Body of pancreas (tissue), 4 donors: ENCODE measurements at regions of chr7 and their contacts with region 1.

Region 1: GRCh38 chr7:148884299-148885022 is 370 bp upstream of the EZH2 start:
- DNase-seq: peak; percentile 91 to 93 (median 92)
- ATAC-seq: peak; percentile 97
- H3K4me3 ChIP-seq: peak overlapping the region; percentile 9 to 88
- H3K27ac ChIP-seq: peak overlapping the region; percentile 80 to 98 (median 90)
- H3K4me1 ChIP-seq: peaks cover 6% of the 10 kb centered on the region
- H3K27me3 ChIP-seq: no peaks in the 10 kb centered on the region
- CTCF ChIP-seq: no peak
- POLR2A ChIP-seq: peak; percentile 79 to 85 (median 83)

Region 2: DNA sequence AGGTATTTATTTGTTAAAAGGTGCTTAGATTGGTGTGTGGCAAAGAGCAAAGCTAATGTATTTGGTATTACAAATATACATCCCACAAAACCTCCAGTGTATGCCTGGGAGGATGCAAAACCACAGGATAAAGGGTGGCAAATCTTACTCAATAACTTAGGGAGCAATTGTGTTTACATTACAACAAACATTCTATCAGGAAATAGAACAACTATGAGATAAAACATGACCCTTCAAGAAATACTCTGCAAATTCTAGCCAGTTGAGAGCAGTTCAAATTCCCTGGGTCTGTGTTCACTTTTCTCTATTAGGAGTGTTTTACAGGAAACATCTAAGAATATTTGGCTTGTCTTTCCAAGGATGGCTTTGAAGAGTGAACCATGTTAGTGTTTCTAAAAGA is 120.8 kb before region 1 on chr7:
- intact Hi-C with region 1: no loop called
- DNase-seq: no peak
- ATAC-seq: no peak
- H3K4me3 ChIP-seq: no peak overlapping the region
- H3K27ac ChIP-seq: no peak overlapping the region
- H3K4me1 ChIP-seq: no peaks in the 10 kb centered on the region
- H3K27me3 ChIP-seq: no peaks in the 10 kb centered on the region
- CTCF ChIP-seq: no peak
- POLR2A ChIP-seq: no peak

Region 3: DNA sequence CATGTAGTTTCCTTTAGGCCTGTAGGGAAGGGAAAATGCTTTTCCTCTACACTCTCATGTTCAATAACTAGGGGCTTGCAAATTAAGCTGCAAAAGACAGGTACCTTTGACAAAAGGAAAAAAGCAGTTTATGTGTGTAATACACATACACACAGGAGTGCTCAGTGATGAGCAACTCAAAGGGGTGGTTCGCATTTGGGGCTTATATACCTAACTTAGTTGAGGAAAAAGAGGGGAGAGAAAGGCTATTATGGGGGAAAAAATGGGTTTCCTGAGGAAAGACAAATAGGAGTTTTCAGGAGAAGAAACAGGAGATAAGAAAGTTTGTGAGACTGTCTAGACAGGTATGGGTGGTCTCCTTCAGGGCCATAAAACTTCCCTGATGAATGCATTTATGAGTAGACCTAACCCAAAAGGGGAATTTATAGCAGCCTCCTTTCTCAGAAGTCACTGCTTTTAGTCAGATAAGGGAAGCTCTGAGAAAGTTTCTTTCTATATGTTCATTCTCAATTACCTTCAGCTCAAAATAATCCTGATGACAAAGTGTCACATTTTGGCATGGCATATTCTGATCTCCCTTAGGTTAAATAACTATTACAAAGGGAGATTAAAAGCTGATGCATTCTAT is 54.8 kb after region 1 on chr7:
- intact Hi-C with region 1: loop called (anchors 10 kb)
- DNase-seq: no peak
- ATAC-seq: no peak
- H3K4me3 ChIP-seq: no peak overlapping the region
- H3K27ac ChIP-seq: no peak overlapping the region
- H3K4me1 ChIP-seq: peaks cover 8% of the 10 kb centered on the region
- H3K27me3 ChIP-seq: no peaks in the 10 kb centered on the region
- CTCF ChIP-seq: no peak
- POLR2A ChIP-seq: no peak

Region 4: DNA sequence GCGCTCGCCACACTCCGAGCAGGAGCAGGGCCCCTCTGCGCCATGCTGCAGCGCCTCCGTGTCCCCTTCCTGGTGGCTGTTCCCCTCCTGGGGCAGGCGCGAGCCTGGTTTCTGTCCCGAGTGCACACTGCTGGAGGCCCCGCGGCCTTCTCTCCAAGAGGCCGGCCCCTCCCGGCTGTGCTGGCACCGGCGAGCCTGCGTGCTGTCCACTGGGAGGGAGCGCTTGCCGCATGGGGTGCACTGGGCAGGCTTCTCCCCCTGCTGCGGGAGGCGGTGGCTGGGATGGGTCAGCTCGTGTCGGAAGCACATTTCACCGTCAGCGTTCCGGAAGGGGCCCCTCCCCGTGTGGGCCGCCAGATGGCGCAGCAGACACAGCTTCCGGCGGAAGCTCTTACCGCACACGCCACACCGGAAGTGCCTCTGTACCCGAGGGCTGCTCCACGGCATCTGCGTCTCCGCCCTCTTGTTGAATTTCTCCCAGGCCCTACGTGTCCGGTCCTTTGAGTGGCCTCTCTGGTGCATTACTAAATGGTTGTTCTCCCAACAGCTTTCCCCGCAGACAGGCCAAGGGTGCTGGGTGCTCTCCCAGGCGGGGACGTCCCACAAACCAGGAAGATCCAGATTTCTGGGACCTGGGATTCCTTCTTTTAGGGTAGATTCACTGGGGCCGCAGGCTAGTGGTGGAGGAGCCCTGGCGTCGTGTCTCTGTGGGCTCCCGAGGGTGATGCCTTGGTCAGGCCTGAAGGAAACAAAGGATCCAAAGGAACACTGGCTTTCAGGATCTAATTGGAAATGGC is 187.4 kb after region 1 on chr7:
- intact Hi-C with region 1: no loop called
- DNase-seq: no peak
- ATAC-seq: no peak
- H3K4me3 ChIP-seq: no peak overlapping the region
- H3K27ac ChIP-seq: no peak overlapping the region
- H3K4me1 ChIP-seq: no peaks in the 10 kb centered on the region
- H3K27me3 ChIP-seq: no peaks in the 10 kb centered on the region
- CTCF ChIP-seq: no peak
- POLR2A ChIP-seq: no peak

Region 5: GRCh38 chr7:149147072-149147751 is 262.8 kb after region 1 on chr7 and contains the start of gene ZNF398:
- intact Hi-C with region 1: no loop called
- DNase-seq: peak; percentile 71 to 80 (median 74)
- ATAC-seq: peak; percentile 91
- H3K4me3 ChIP-seq: peak within 1 kb of the TSS; percentile 58 to 82
- H3K27ac ChIP-seq: peak within 1 kb of the TSS; percentile 65 to 94 (median 88)
- H3K4me1 ChIP-seq: peaks cover 48% of the 10 kb centered on the region
- H3K27me3 ChIP-seq: no peaks in the 10 kb centered on the region
- CTCF ChIP-seq: peak; percentile 50 to 99 (median 85)
- POLR2A ChIP-seq: peak; percentile 45 to 51 (median 50)
- total RNA-seq, gene ZNF398: 11.2 to 22.4 TPM